ENCODE measurements at regions of chr7 and their contacts with region 1.

Region 1: GRCh38 chr7:44460325-44460724 is 30.1 kb downstream of the NUDCD3 start:
- DNase-seq: peak; percentile 89
- H3K4me3 ChIP-seq: peak overlapping the region; percentile 57
- H3K27ac ChIP-seq: peak overlapping the region; percentile 83
- H3K4me1 ChIP-seq: peaks cover 65% of the 10 kb centered on the region
- CTCF ChIP-seq: no peak

Region 2: GRCh38 chr7:44431091-44431608 is 29.2 kb before region 1 on chr7:
- CTCF ChIA-PET with region 1: interaction called, 3 read pairs
- POLR2A ChIA-PET with region 1: interaction called, 9 read pairs
- intact Hi-C with region 1: loop called (anchors 1 kb)
- DNase-seq: peak; percentile 84
- H3K4me3 ChIP-seq: peak overlapping the region; percentile 45
- H3K27ac ChIP-seq: peak overlapping the region; percentile 83
- H3K4me1 ChIP-seq: peaks cover 57% of the 10 kb centered on the region
- CTCF ChIP-seq: peak; percentile 76

Measured in OCI-LY7 (cell line).